Sciatic nerve (tissue), 2 donors: ENCODE measurements at regions of chr13 and their contacts with region 1.

Region 1: DNA sequence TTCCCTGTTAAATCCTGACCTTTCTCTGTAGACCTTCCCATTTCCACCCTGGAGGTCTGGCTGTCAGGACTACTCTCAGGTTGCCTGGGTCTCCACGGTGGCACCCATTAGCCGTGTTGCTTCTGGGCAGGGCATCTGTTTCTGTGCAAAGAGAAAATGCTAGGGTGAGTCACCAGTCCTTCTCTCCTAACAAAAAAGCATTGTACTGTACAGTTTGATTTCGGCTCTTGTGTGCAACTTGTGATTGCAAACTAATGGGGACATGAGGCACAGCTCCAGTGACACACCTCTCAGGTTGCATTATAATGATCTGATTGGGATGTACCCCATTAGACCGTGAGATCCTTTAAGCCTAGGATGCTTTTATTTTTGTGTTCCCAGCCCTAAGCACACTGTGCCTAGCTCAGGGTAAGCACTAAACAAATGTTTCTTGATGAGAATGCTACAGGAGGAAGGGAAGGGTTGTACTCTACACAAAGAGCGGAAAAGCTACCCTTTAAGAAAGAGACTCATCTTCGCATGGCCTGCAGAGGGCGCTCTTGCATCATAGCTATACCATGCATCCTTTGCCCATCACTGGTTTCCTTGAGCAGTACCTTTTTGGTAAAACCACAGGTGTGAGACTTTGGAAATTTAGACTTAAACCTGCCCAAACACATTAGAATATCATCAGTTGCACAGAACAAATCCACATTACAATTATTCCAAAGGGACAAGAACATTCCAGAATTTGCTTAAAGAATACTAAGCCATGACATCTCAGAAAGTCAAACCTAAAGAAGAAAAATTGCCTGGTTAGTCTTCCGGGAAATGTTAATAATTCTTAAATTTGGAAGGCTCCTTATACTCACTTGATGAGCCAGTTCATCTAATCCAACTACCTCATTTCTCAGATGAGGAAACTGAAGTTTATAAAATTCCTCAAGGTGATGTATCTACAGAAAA is 20.3 kb upstream of the TRIM13 start:
- DNase-seq: peak; percentile 82
- ATAC-seq: peak; percentile 80

Region 2: GRCh38 chr13:49569956-49570689 is 406.5 kb before region 1 on chr13:
- intact Hi-C with region 1: no loop called
- DNase-seq: no peak
- ATAC-seq: no peak

Region 3: GRCh38 chr13:50801087-50801931 is 824.7 kb after region 1 on chr13:
- intact Hi-C with region 1: loop called (anchors 5 kb)
- DNase-seq: peak; percentile 72
- ATAC-seq: peak; percentile 95